Activated CD4-positive, alpha-beta T cell treated with anti-CD3 and anti-CD28 coated beads for 36 hours (primary cell): ENCODE measurements at regions of chr20 and their contacts with region 1.

Region 1: DNA sequence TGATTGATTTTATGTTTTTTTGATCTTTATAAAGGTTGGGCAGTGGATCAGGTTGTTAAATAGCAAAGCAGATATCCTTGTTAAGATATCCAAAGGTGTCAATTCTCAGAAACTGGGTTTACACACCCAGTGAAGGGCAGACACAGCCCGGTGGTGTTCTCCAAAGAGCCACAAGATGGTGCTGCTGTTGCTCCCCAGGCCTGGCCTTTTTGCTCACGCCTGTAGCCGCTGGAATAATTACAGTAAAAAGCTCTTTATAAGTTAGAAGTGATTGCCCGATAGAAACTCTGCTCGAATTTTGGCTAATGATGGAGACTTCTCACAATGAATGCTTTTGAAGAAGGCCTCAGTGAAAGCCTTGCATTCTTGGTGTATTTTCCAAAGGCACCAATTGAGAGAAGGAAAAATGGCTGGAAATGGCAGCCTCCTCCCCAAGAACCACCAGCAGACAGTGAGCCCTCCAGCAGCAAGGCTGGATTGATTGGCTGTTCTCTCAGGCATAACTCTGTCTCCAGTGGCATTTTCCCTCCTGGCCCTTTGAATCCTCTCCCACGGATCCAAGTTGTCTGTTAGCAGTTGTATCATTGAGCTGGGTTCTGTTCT is 120.5 kb upstream of the CHD6 start:
- DNase-seq: peak; percentile 74
- ATAC-seq: peak; percentile 81
- H3K4me3 Mint-ChIP-seq: no peak overlapping the region
- H3K27ac Mint-ChIP-seq: no peak overlapping the region
- H3K4me1 Mint-ChIP-seq: no peaks in the 10 kb centered on the region
- H3K27me3 Mint-ChIP-seq: no peaks in the 10 kb centered on the region

Region 2: DNA sequence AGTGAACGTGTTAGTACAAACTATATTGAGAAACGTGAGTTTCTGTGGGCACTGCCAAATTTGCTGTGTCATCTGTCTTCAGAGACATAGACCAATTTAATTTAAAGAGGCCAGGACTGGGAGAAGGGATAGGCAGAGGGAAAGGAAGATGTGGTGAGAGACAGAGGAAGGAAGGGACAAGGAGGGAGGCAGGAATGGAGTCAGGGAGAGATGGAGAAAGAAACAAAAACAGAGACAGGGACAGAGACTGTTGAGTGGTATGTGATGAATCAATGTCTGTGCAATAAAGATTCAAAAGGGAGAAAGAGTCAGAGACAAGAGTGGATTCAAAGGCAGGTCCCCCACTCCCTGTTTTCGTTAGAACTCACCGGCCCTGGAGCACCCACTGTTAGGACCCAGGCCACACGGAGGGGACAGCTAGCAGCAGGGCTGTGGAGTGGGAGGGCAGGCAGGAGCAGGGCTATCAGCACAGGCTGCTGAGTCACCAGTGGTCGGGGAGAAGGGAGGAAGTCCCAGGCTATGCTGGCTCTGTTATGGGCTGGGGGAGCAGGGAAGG is 68.9 kb before region 1 on chr20:
- CTCF ChIA-PET with region 1: no interaction called
- POLR2A ChIA-PET with region 1: no interaction called
- intact Hi-C with region 1: no loop called
- DNase-seq: no peak
- ATAC-seq: no peak
- H3K4me3 Mint-ChIP-seq: no peak overlapping the region
- H3K27ac Mint-ChIP-seq: no peak overlapping the region
- H3K4me1 Mint-ChIP-seq: no peaks in the 10 kb centered on the region
- H3K27me3 Mint-ChIP-seq: peaks cover 16% of the 10 kb centered on the region

Region 3: GRCh38 chr20:41722236-41722635 is 16.5 kb before region 1 on chr20:
- CTCF ChIA-PET with region 1: interaction called, 12 read pairs
- POLR2A ChIA-PET with region 1: no interaction called
- intact Hi-C with region 1: no loop called
- DNase-seq: no peak
- ATAC-seq: no peak
- H3K4me3 Mint-ChIP-seq: no peak overlapping the region
- H3K27ac Mint-ChIP-seq: no peak overlapping the region
- H3K4me1 Mint-ChIP-seq: no peaks in the 10 kb centered on the region
- H3K27me3 Mint-ChIP-seq: peaks cover 2% of the 10 kb centered on the region

Region 4: DNA sequence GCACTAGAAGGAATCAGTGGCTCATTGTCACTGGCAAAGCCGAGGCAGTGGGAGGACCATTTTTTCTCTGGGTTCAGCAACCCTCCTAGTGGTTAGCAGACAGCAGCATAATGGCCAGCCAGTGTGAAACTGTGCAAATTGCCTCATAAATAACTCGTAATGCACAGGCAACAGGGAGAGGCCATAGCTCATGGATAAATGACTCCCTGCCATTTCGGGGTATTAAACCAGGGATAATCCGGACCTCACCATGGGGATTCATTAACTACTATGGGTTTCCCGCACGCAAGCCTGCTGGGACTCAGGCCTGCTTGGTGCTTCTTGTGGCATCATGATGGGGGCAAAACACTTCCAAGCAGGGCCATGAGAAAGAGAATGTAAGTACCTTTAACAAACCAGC is 37.7 kb after region 1 on chr20:
- CTCF ChIA-PET with region 1: no interaction called
- POLR2A ChIA-PET with region 1: no interaction called
- intact Hi-C with region 1: no loop called
- DNase-seq: no peak
- ATAC-seq: no peak
- H3K4me3 Mint-ChIP-seq: no peak overlapping the region
- H3K27ac Mint-ChIP-seq: no peak overlapping the region
- H3K4me1 Mint-ChIP-seq: no peaks in the 10 kb centered on the region
- H3K27me3 Mint-ChIP-seq: peaks cover 15% of the 10 kb centered on the region

Region 5: GRCh38 chr20:41837669-41838224 is 99.0 kb after region 1 on chr20:
- CTCF ChIA-PET with region 1: no interaction called
- POLR2A ChIA-PET with region 1: no interaction called
- intact Hi-C with region 1: no loop called
- DNase-seq: no peak
- ATAC-seq: no peak
- H3K4me3 Mint-ChIP-seq: no peak overlapping the region
- H3K27ac Mint-ChIP-seq: no peak overlapping the region
- H3K4me1 Mint-ChIP-seq: no peaks in the 10 kb centered on the region
- H3K27me3 Mint-ChIP-seq: peaks cover 24% of the 10 kb centered on the region

Region 6: GRCh38 chr20:42018951-42019350 is 280.2 kb after region 1 on chr20:
- CTCF ChIA-PET with region 1: no interaction called
- POLR2A ChIA-PET with region 1: no interaction called
- intact Hi-C with region 1: loop called in 1 of 2 experiments (anchors 5 kb)
- DNase-seq: peak; percentile 5
- ATAC-seq: no peak
- H3K4me3 Mint-ChIP-seq: no peak overlapping the region
- H3K27ac Mint-ChIP-seq: no peak overlapping the region
- H3K4me1 Mint-ChIP-seq: no peaks in the 10 kb centered on the region
- H3K27me3 Mint-ChIP-seq: peaks cover under 1% of the 10 kb centered on the region

Region 7: GRCh38 chr20:42530822-42531448 is 792.2 kb after region 1 on chr20:
- CTCF ChIA-PET with region 1: no interaction called
- POLR2A ChIA-PET with region 1: no interaction called
- intact Hi-C with region 1: loop called in 1 of 2 experiments (anchors 2 kb)
- DNase-seq: peak; percentile 8
- ATAC-seq: no peak
- H3K4me3 Mint-ChIP-seq: no peak overlapping the region
- H3K27ac Mint-ChIP-seq: no peak overlapping the region
- H3K4me1 Mint-ChIP-seq: no peaks in the 10 kb centered on the region
- H3K27me3 Mint-ChIP-seq: peaks cover 6% of the 10 kb centered on the region

Region 8: DNA sequence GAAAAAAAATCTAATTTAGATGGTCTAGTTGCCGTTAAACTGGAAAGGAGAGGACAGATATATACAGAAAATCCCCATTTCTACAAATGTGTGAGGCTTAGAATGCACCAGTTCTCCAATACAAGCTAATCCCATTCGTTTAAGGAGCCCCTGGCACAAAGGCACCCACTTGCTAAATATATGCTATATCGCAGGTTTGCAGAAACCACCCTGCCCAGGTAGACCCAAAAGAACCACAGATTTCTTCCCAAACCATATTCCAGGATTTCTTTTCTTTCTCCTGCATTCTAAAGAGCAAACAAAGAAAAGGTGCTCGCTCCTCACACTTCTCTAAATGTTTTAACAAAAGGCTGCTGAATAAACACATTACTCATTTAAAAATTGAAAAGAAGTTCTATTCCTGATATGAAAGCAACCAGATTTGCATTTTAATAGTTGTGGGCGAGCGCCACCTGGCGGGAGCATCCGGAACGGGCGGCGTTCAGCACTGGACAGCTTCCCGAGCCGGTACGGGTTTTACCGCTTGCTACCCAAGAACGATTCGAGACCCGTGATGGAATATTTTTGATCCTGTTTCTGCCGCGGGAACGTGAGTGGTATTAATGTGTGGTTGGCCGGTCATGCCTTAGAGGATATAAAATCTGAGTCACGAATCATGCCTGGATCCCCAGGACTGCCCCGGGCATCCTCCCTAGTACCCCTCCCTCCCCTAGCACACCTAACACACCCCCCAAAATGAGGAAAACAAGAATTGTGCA is 1449.0 kb after region 1 on chr20:
- CTCF ChIA-PET with region 1: interaction called, 4 read pairs
- POLR2A ChIA-PET with region 1: no interaction called
- intact Hi-C with region 1: loop called (anchors 1 to 2 kb)
- DNase-seq: peak; percentile 83
- ATAC-seq: peak; percentile 42
- H3K4me3 Mint-ChIP-seq: no peak overlapping the region
- H3K27ac Mint-ChIP-seq: no peak overlapping the region
- H3K4me1 Mint-ChIP-seq: peaks cover 4% of the 10 kb centered on the region
- H3K27me3 Mint-ChIP-seq: peaks cover 43% of the 10 kb centered on the region

Region 9: GRCh38 chr20:43408848-43409576 is 1670.3 kb after region 1 on chr20:
- CTCF ChIA-PET with region 1: interaction called, 6 read pairs
- POLR2A ChIA-PET with region 1: no interaction called
- intact Hi-C with region 1: loop called in 1 of 2 experiments (anchors 5 kb)
- DNase-seq: peak; percentile 25
- ATAC-seq: no peak
- H3K4me3 Mint-ChIP-seq: no peak overlapping the region
- H3K27ac Mint-ChIP-seq: no peak overlapping the region
- H3K4me1 Mint-ChIP-seq: no peaks in the 10 kb centered on the region
- H3K27me3 Mint-ChIP-seq: peaks cover 42% of the 10 kb centered on the region